ENCODE measurements at regions of chr6 and their contacts with region 1.

Region 1: DNA sequence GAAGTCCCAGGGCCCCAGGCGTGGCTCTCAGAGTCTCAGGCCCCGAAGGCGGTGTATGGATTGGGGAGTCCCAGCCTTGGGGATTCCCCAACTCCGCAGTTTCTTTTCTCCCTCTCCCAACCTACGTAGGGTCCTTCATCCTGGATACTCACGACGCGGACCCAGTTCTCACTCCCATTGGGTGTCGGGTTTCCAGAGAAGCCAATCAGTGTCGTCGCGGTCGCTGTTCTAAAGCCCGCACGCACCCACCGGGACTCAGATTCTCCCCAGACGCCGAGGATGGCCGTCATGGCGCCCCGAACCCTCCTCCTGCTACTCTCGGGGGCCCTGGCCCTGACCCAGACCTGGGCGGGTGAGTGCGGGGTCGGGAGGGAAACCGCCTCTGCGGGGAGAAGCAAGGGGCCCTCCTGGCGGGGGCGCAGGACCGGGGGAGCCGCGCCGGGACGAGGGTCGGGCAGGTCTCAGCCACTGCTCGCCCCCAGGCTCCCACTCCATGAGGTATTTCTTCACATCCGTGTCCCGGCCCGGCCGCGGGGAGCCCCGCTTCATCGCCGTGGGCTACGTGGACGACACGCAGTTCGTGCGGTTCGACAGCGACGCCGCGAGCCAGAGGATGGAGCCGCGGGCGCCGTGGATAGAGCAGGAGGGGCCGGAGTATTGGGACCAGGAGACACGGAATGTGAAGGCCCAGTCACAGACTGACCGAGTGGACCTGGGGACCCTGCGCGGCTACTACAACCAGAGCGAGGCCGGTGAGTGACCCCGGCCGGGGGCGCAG is at the start of gene HLA-A:
- DNase-seq: peak; percentile 86 to 98 (median 94)
- ATAC-seq: peak; percentile 84
- H3K4me3 ChIP-seq: peak within 1 kb of the TSS; percentile 75 to 82
- H3K4me3 Mint-ChIP-seq: peak within 1 kb of the TSS; percentile 94
- H3K27ac ChIP-seq: peak within 1 kb of the TSS; percentile 99 to 100
- H3K27ac Mint-ChIP-seq: peak within 1 kb of the TSS; percentile 100
- H3K4me1 ChIP-seq: peaks cover 49% of the 10 kb centered on the region
- H3K4me1 Mint-ChIP-seq: peaks cover 48% of the 10 kb centered on the region
- H3K27me3 ChIP-seq: no peaks in the 10 kb centered on the region
- H3K27me3 Mint-ChIP-seq: no peaks in the 10 kb centered on the region
- CTCF ChIP-seq: no peak
- total RNA-seq, gene HLA-A: 2,151 to 2,183 TPM

Region 2: GRCh38 chr6:29769336-29769735 is 173.1 kb before region 1 on chr6:
- CTCF ChIA-PET with region 1: no interaction called
- POLR2A ChIA-PET with region 1: no interaction called
- intact Hi-C with region 1: no loop called
- DNase-seq: no peak
- ATAC-seq: no peak
- H3K4me3 ChIP-seq: no peak overlapping the region
- H3K4me3 Mint-ChIP-seq: no peak overlapping the region
- H3K27ac ChIP-seq: no peak overlapping the region
- H3K27ac Mint-ChIP-seq: no peak overlapping the region
- H3K4me1 ChIP-seq: no peaks in the 10 kb centered on the region
- H3K4me1 Mint-ChIP-seq: no peaks in the 10 kb centered on the region
- H3K27me3 ChIP-seq: no peaks in the 10 kb centered on the region
- H3K27me3 Mint-ChIP-seq: peaks cover 32% of the 10 kb centered on the region
- CTCF ChIP-seq: no peak

Region 3: DNA sequence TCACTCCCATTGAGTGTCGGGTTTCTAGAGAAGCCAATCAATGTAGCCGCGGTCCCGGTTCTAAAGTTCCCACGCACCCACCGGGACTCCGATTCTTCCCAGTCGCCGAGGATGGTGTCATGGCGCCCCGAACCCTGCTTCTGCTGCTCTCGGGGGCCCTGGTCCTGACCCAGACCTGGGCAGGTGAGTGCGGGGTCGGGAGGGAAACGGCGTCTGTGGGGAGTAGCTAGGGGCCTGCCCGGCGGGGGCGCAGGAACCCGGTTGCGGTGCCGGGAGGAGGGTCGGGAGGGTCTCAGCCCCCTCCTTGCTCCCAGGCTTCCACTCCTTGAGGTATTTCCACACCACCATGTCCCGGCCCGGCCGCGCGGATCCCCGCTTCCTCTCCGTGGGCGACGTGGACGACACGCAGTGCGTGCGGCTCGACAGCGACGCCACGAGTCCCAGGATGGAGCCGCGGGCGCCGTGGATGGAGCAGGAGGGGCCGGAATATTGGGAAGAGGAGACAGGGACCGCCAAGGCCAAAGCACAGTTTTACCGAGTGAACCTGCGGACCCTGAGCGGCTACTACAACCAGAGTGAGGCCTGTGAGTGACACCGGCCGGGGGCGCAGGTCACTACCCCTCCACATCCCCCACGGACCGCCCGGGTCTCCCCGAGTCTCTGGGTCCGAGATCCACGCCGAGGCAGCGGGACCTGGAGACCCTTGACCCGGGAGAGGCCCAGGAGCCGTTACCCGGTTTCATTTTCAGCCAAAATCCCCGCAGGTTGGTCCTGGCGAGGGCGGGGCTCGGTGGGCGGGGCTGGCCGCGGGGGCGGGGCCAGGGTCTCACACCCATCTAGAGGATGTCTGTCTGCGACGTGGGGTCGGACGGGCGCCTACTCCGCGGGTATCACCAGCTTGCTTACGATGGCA is 150.1 kb before region 1 on chr6:
- CTCF ChIA-PET with region 1: no interaction called
- POLR2A ChIA-PET with region 1: no interaction called
- intact Hi-C with region 1: loop called in 1 of 2 experiments (anchors 5 kb)
- DNase-seq: peak; percentile 65 to 88 (median 77)
- ATAC-seq: peak; percentile 91
- H3K4me3 ChIP-seq: peak overlapping the region; percentile 65 to 95
- H3K4me3 Mint-ChIP-seq: peak overlapping the region; percentile 90
- H3K27ac ChIP-seq: peak overlapping the region; percentile 58 to 84
- H3K27ac Mint-ChIP-seq: peak overlapping the region; percentile 83
- H3K4me1 ChIP-seq: peaks cover 13% of the 10 kb centered on the region
- H3K4me1 Mint-ChIP-seq: peaks cover 15% of the 10 kb centered on the region
- H3K27me3 ChIP-seq: peaks cover 0 to 8% of the 10 kb centered on the region in 2 experiments
- H3K27me3 Mint-ChIP-seq: peaks cover 32% of the 10 kb centered on the region
- CTCF ChIP-seq: no peak

Region 4: GRCh38 chr6:29926413-29927274 is 15.8 kb before region 1 on chr6:
- CTCF ChIA-PET with region 1: no interaction called
- POLR2A ChIA-PET with region 1: interaction called, 15 read pairs
- intact Hi-C with region 1: loop called (anchors 1 kb)
- DNase-seq: peak; percentile 65 to 93 (median 83)
- ATAC-seq: peak; percentile 93
- H3K4me3 ChIP-seq: peak overlapping the region; percentile 88 to 93
- H3K4me3 Mint-ChIP-seq: peak overlapping the region; percentile 83
- H3K27ac ChIP-seq: peak overlapping the region; percentile 92 to 99
- H3K27ac Mint-ChIP-seq: peak overlapping the region; percentile 94
- H3K4me1 ChIP-seq: peaks cover 8% of the 10 kb centered on the region
- H3K4me1 Mint-ChIP-seq: peaks cover 32% of the 10 kb centered on the region
- H3K27me3 ChIP-seq: no peaks in the 10 kb centered on the region
- H3K27me3 Mint-ChIP-seq: no peaks in the 10 kb centered on the region
- CTCF ChIP-seq: no peak

Region 5: GRCh38 chr6:30061092-30061857 is 118.8 kb after region 1 on chr6 and contains the start of gene POLR1H:
- CTCF ChIA-PET with region 1: no interaction called
- POLR2A ChIA-PET with region 1: no interaction called
- intact Hi-C with region 1: loop called in 1 of 2 experiments (anchors 5 kb)
- DNase-seq: peak; percentile 68 to 96 (median 87)
- ATAC-seq: peak; percentile 87
- H3K4me3 ChIP-seq: peak within 1 kb of the TSS; percentile 82 to 87
- H3K4me3 Mint-ChIP-seq: peak within 1 kb of the TSS; percentile 97
- H3K27ac ChIP-seq: peak within 1 kb of the TSS; percentile 89 to 93
- H3K27ac Mint-ChIP-seq: peak within 1 kb of the TSS; percentile 99
- H3K4me1 ChIP-seq: peaks cover 29% of the 10 kb centered on the region
- H3K4me1 Mint-ChIP-seq: peaks cover 56% of the 10 kb centered on the region
- H3K27me3 ChIP-seq: no peaks in the 10 kb centered on the region
- H3K27me3 Mint-ChIP-seq: no peaks in the 10 kb centered on the region
- CTCF ChIP-seq: no peak
- total RNA-seq, gene POLR1H: 26.6 to 30.7 TPM